ENCODE measurements at regions of chr10 and their contacts with region 1.

Region 1: GRCh38 chr10:79393924-79394610 is 46.8 kb downstream of the PPIF start:
- DNase-seq: peak; percentile 5
- H3K4me3 ChIP-seq: no peak overlapping the region
- H3K27ac ChIP-seq: peak overlapping the region in 1 of 4 donors; percentile 1
- H3K4me1 ChIP-seq: peaks cover 29 to 47% (median 35%) of the 10 kb centered on the region in 4 donors
- H3K27me3 ChIP-seq: no peaks in the 10 kb centered on the region
- CTCF ChIP-seq: no peak
- EP300 ChIP-seq: no peak
- POLR2A ChIP-seq: no peak

Region 2: GRCh38 chr10:79166312-79166721 is 227.8 kb before region 1 on chr10:
- in situ Hi-C with region 1: no loop called
- intact Hi-C with region 1: no loop called
- DNase-seq: no peak
- H3K4me3 ChIP-seq: no peak overlapping the region
- H3K27ac ChIP-seq: no peak overlapping the region
- H3K4me1 ChIP-seq: peaks cover 3 to 25% (median 7%) of the 10 kb centered on the region in 4 donors
- H3K27me3 ChIP-seq: no peaks in the 10 kb centered on the region
- CTCF ChIP-seq: no peak
- EP300 ChIP-seq: no peak
- POLR2A ChIP-seq: no peak

Region 3: GRCh38 chr10:79356104-79356503 is 38.0 kb before region 1 on chr10:
- in situ Hi-C with region 1: no loop called
- intact Hi-C with region 1: loop called (anchors 2 kb)
- DNase-seq: no peak
- H3K4me3 ChIP-seq: no peak overlapping the region
- H3K27ac ChIP-seq: no peak overlapping the region
- H3K4me1 ChIP-seq: peaks cover 0 to 12% (median 4%) of the 10 kb centered on the region in 4 donors
- H3K27me3 ChIP-seq: no peaks in the 10 kb centered on the region
- CTCF ChIP-seq: no peak
- EP300 ChIP-seq: no peak
- POLR2A ChIP-seq: no peak

Region 4: DNA sequence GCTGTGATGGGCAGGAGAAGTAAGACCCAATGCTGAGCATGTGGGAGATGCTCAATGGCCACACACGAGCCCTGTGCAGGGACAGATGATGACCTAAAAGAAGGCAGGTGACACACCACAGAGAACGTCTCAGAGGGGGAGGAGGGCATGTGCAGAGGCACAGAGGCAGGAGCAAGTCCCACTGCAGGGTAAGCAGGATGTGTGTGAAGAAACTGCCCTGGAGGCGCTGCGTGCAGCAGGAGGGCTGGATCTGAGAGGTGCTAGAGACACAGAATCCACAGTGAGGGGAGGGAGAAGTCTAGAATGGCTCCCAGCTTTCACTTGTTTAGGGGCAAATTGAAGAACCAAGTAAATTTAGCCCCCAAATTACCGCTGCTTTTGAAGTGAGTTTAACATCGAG is 977.4 kb after region 1 on chr10:
- in situ Hi-C with region 1: no loop called
- intact Hi-C with region 1: no loop called
- DNase-seq: no peak
- H3K4me3 ChIP-seq: no peak overlapping the region
- H3K27ac ChIP-seq: no peak overlapping the region
- H3K4me1 ChIP-seq: no peaks in the 10 kb centered on the region
- H3K27me3 ChIP-seq: no peaks in the 10 kb centered on the region
- CTCF ChIP-seq: no peak
- EP300 ChIP-seq: no peak
- POLR2A ChIP-seq: no peak

Measured in transverse colon (tissue), 4 donors.